GM12878 (cell line): ENCODE measurements at regions of chr10 and their contacts with region 1.

Region 1: DNA sequence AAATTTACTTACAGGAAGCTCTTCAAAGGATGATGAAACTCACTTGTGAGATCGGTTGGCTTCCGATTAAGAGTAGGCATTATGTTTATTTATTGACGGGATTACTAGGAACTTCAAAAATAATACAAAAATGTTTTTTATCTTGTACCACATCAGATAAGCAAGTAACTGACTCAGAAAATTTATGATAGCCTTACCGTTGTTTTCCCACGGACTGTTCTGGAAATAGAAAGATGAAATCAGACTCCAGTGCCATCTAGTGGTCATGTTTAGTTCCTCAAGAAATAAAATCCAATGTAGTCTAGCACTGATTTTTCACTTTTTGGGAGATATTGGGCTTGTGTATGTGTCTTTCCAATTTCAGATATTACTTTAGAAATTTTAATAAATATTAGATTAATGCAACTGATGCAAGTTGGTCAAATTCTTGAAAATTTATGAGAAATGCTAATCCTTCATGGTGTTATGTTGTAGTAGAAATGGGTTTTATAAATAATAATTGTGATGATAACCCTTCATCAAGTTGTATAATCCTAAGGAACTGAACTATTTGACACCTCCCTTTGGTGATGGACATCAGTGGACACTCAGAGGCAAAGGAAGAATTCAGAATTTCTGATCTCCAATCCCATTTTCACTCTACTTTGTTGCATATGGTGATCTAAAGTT is 168.8 kb downstream of the TMEM26 start:
- DNase-seq: no peak
- ATAC-seq: no peak
- H3K4me3 ChIP-seq: no peak overlapping the region
- H3K27ac ChIP-seq: no peak overlapping the region
- H3K4me1 ChIP-seq: peaks cover 14% of the 10 kb centered on the region; the same call in 1 of the 2 replicates
- H3K27me3 ChIP-seq: no peaks in the 10 kb centered on the region
- CTCF ChIP-seq: peak; percentile 53 to 62 (median 60); a peak in 5 of 6 replicates
- EP300 ChIP-seq: no peak
- POLR2A ChIP-seq: no peak
- RAD21 ChIP-seq: peak; percentile 59

Region 2: DNA sequence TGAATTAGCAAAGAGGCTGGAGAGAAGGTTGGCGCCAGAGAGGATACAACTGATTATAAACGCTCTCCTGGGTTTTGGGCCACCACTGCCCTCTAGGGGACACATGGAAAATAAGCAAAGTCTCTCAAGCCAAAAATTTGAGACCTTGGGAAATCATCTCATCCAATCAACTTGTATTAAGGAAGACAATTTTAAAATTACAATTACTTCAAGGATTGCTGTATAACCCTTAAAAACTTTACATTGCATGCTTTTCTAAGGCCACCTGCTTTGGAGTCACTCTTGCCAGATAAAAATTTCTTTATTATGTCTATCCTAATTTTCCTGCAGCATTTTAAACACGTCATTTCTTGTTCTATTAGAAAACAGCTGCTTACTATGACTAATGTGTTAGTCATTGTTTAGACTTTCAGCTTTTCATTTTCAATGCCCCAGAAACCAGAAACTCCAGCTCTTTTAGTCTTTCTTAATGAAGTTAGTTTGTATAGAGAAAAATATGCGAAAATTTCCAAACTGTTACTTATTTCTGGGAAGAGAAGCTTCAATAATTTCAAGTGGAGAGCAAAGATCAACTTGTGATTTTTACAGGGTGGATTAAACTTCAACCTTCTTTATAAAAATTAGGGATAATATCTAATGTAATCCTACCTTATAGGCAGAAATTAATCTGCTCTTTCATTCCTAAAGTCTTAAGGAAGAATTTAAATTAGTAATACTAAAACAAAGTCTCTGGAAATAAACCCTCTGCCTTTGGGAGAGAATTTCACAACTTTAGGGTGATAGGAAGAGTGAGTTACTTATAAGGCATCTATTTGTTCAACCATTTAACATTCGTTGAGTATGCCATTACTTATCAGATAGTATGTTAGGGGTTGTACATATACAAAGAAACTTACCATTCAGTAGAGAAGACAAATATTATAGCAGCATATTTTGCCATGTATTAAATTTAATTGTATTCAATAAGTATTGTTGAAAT is 319.8 kb before region 1 on chr10:
- CTCF ChIA-PET with region 1: interaction called, 4 read pairs
- POLR2A ChIA-PET with region 1: no interaction called
- RAD21 ChIA-PET with region 1: no interaction called
- SMC1A ChIA-PET with region 1: no interaction called
- in situ Hi-C with region 1: no loop called
- intact Hi-C with region 1: loop called (anchors 5 kb)
- DNase-seq: no peak
- ATAC-seq: peak; percentile 73
- H3K4me3 ChIP-seq: no peak overlapping the region
- H3K27ac ChIP-seq: no peak overlapping the region
- H3K4me1 ChIP-seq: no peaks in the 10 kb centered on the region
- H3K27me3 ChIP-seq: no peaks in the 10 kb centered on the region; a peak in 1 of 4 replicates
- CTCF ChIP-seq: peak; percentile 62 to 85 (median 73)
- EP300 ChIP-seq: no peak
- POLR2A ChIP-seq: no peak
- RAD21 ChIP-seq: peak; percentile 80

Region 3: GRCh38 chr10:61135276-61135721 is 149.1 kb before region 1 on chr10:
- CTCF ChIA-PET with region 1: interaction called, 20 read pairs
- POLR2A ChIA-PET with region 1: no interaction called
- RAD21 ChIA-PET with region 1: interaction called, 9 read pairs
- SMC1A ChIA-PET with region 1: interaction called, 8 read pairs
- in situ Hi-C with region 1: loop called (anchors 5 kb)
- intact Hi-C with region 1: loop called (anchors 2 kb)
- DNase-seq: peak; percentile 49
- ATAC-seq: peak; percentile 99
- H3K4me3 ChIP-seq: no peak overlapping the region
- H3K27ac ChIP-seq: peak overlapping the region; percentile 42; the same call in 1 of the 2 replicates
- H3K4me1 ChIP-seq: peaks cover 7% of the 10 kb centered on the region; the same call in 1 of the 2 replicates
- H3K27me3 ChIP-seq: no peaks in the 10 kb centered on the region
- CTCF ChIP-seq: no peak
- EP300 ChIP-seq: peak in 1 of 2 experiments; percentile 8; a peak in 1 of 4 replicates
- POLR2A ChIP-seq: no peak
- RAD21 ChIP-seq: no peak

Region 4: DNA sequence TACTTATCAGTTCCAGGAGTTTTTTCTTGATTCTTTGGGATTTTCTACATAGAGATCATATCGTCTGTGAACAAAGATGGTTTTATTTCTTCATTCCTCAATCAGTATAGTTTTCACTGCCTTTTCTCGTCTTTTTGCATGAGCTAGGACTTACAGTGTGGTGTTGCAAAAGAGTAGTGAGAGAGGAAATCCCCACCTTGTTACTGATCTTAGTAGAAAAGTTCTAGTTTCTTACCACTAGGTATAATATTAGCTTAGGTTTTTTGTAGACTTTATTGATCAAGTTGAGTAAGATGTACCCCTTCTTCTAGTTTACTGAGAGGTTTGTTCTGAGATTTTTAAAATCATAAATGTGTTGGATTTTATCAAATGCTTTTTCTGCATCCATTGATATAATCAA is 45.5 kb after region 1 on chr10:
- CTCF ChIA-PET with region 1: interaction called, 3 read pairs
- POLR2A ChIA-PET with region 1: no interaction called
- RAD21 ChIA-PET with region 1: interaction called, 3 read pairs
- SMC1A ChIA-PET with region 1: interaction called, 3 read pairs
- in situ Hi-C with region 1: no loop called
- intact Hi-C with region 1: loop called (anchors 1 kb)
- DNase-seq: no peak
- ATAC-seq: peak; percentile 92
- H3K4me3 ChIP-seq: no peak overlapping the region
- H3K27ac ChIP-seq: no peak overlapping the region
- H3K4me1 ChIP-seq: no peaks in the 10 kb centered on the region
- H3K27me3 ChIP-seq: no peaks in the 10 kb centered on the region; a peak in 1 of 4 replicates
- CTCF ChIP-seq: no peak
- EP300 ChIP-seq: no peak
- POLR2A ChIP-seq: no peak
- RAD21 ChIP-seq: no peak

Region 5: DNA sequence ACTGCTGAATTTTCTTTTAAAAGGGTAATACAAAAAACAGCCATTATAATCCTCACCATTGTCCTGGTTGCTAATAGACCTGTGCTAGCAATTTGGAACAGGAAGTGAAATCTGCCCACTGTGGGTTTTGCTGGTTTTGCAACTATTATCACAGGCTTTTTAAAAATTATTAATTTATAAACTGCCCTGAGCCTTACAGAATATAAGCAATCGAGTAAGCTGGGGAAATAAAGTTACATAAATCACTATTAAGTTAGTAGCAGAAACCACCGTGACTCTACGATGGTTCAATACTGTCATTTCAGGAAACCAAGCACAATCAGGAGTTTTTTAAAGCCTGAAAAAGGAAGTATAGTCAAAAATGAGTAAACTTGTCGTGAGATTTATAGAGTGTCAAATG is 106.5 kb after region 1 on chr10:
- CTCF ChIA-PET with region 1: no interaction called
- POLR2A ChIA-PET with region 1: no interaction called
- RAD21 ChIA-PET with region 1: no interaction called
- SMC1A ChIA-PET with region 1: interaction called, 6 read pairs
- in situ Hi-C with region 1: no loop called
- intact Hi-C with region 1: loop called (anchors 2 kb)
- DNase-seq: peak; percentile 19
- ATAC-seq: peak; percentile 93
- H3K4me3 ChIP-seq: no peak overlapping the region
- H3K27ac ChIP-seq: no peak overlapping the region
- H3K4me1 ChIP-seq: no peaks in the 10 kb centered on the region
- H3K27me3 ChIP-seq: no peaks in the 10 kb centered on the region
- CTCF ChIP-seq: no peak
- EP300 ChIP-seq: 0 out of 4 replicates have a peak, but pooled peaks of 1 of the 2 experiments have one; percentile 18
- POLR2A ChIP-seq: no peak
- RAD21 ChIP-seq: no peak